ENCODE measurements at regions of chr7 and their contacts with region 1.

Region 1: DNA sequence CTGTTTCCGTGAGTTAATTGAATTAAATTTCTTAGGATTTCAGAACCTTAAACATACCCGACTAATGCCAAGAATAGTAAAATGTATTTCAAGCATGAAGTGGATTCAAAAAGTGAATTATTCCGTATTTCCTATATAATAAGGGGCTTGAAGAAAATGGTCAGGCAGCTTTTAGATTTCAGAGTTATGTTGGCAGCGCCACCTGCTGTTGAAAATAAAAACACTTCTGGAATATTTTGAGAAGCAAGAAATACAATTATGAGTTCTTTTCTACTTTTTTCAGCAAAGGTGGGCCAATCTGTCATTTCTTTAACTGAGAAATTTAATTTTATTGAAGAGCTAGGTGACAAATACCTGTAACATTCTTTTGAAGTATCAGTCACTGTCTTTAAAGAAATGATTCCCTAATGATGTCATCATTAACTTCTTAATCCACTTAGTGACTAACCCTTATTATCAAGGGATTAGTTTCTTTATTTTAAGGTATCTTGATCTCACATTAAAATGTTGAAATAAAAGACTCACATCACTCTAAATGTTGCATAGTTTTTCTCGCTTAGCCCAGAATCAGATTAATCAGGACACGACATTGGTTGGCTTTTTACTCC is 36.6 kb upstream of the AGR3 start:
- DNase-seq: peak; percentile 44
- ATAC-seq: no peak
- H3K4me3 Mint-ChIP-seq: no peak overlapping the region
- H3K27ac Mint-ChIP-seq: no peak overlapping the region
- H3K4me1 Mint-ChIP-seq: peaks cover 14% of the 10 kb centered on the region
- H3K27me3 Mint-ChIP-seq: no peaks in the 10 kb centered on the region
- CTCF ChIP-seq: peak; percentile 74

Region 2: GRCh38 chr7:16801111-16801542 is 117.3 kb before region 1 on chr7:
- CTCF ChIA-PET with region 1: interaction called, 28 read pairs
- POLR2A ChIA-PET with region 1: no interaction called
- intact Hi-C with region 1: loop called (anchors 5 kb)
- DNase-seq: no peak
- ATAC-seq: peak; percentile 74
- H3K4me3 Mint-ChIP-seq: no peak overlapping the region
- H3K27ac Mint-ChIP-seq: no peak overlapping the region
- H3K4me1 Mint-ChIP-seq: no peaks in the 10 kb centered on the region
- H3K27me3 Mint-ChIP-seq: peaks cover 2% of the 10 kb centered on the region
- CTCF ChIP-seq: peak; percentile 57

Region 3: DNA sequence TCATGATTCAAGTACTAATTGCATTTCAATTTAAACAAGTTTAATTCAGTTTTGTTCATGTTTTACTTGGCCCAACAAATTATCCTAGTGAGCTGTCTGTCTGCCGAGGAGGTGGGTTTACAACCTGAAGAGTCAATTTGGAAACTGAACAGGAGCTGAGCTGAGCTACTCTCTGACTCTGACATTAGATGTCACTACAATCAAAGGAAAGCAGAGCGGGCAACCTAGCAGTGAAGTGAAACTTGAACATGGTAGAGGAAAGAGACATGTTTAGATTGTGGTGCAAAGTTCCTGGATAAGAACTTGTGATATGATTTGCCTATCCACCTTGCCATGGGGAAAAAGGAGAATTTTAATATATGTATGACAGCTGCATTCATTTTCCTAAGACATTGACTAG is 27.1 kb before region 1 on chr7:
- CTCF ChIA-PET with region 1: interaction called, 27 read pairs
- POLR2A ChIA-PET with region 1: no interaction called
- intact Hi-C with region 1: no loop called
- DNase-seq: peak; percentile 19
- ATAC-seq: peak; percentile 75
- H3K4me3 Mint-ChIP-seq: no peak overlapping the region
- H3K27ac Mint-ChIP-seq: no peak overlapping the region
- H3K4me1 Mint-ChIP-seq: peaks cover 8% of the 10 kb centered on the region
- H3K27me3 Mint-ChIP-seq: peaks cover 1% of the 10 kb centered on the region
- CTCF ChIP-seq: peak; percentile 47

Region 4: DNA sequence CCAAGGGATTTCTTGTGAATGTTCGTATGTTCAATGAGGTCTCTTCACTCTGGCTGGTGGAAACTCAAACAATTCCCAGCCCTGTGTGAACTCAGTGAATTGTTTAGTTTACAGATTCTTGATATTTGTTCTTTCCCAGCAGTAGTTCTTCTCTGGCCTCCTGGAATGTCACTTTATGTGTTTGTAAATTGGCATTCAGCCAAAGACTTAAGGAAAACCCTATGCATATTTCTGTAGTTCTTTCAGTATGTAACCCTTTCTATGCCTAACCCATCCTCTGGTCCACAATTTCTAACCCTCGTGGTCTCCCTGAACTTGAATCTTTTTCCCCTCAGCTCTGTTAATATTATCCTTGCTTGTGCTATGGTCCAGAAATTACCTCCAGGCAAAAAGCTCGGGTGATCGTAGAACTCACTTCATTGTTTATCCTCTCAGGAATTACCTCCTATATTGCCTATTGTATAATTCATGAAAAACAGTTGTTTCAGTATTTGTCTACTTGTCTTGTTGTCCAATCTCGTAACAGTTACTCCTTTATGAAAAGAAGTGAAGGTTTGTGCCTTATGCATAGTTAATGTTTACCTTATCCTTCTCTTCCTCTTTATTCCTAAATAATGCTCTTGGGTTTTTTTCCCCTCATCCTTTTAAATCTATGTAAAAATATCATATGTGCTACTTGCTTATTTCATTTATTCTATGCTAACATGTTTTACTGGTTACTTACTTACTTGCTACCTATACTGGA is 12.9 kb before region 1 on chr7:
- CTCF ChIA-PET with region 1: interaction called, 10 read pairs
- POLR2A ChIA-PET with region 1: no interaction called
- intact Hi-C with region 1: no loop called
- DNase-seq: no peak
- ATAC-seq: no peak
- H3K4me3 Mint-ChIP-seq: no peak overlapping the region
- H3K27ac Mint-ChIP-seq: no peak overlapping the region
- H3K4me1 Mint-ChIP-seq: no peaks in the 10 kb centered on the region
- H3K27me3 Mint-ChIP-seq: peaks cover 1% of the 10 kb centered on the region
- CTCF ChIP-seq: no peak

Measured in activated CD8-positive, alpha-beta T cell treated with anti-CD3 and anti-CD28 coated beads for 36 hours (primary cell).